Colonic mucosa (tissue), 4 donors: ENCODE measurements at regions of chr3 and their contacts with region 1.

Region 1: GRCh38 chr3:158790901-158791589 is 10.8 kb upstream of the MFSD1 start:
- DNase-seq: no peak
- H3K4me3 ChIP-seq: no peak overlapping the region
- H3K27ac ChIP-seq: no peak overlapping the region
- H3K4me1 ChIP-seq: no peaks in the 10 kb centered on the region
- H3K27me3 ChIP-seq: no peaks in the 10 kb centered on the region
- CTCF ChIP-seq: peak; percentile 84

Region 2: DNA sequence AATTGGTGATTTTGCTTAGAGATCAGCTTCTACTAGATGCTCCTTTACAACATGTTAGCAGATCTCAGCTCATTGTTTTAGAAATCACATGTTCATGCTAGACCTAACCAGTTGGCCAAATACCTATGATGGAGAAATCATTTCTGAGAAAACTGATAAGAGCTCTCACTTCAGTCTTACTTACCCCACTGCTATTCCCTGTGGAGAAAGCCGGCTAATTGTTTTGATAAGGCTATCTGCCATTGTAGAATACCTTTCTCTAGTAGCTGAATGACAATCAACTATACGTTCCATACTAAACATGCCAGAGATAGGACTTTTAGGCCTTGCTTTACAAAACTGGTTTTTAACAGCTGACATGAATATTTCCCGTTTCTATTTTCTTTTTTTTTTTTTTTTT is 246.2 kb before region 1 on chr3:
- intact Hi-C with region 1: no loop called
- DNase-seq: no peak
- H3K4me3 ChIP-seq: no peak overlapping the region
- H3K27ac ChIP-seq: no peak overlapping the region
- H3K4me1 ChIP-seq: no peaks in the 10 kb centered on the region
- H3K27me3 ChIP-seq: no peaks in the 10 kb centered on the region
- CTCF ChIP-seq: no peak

Region 3: DNA sequence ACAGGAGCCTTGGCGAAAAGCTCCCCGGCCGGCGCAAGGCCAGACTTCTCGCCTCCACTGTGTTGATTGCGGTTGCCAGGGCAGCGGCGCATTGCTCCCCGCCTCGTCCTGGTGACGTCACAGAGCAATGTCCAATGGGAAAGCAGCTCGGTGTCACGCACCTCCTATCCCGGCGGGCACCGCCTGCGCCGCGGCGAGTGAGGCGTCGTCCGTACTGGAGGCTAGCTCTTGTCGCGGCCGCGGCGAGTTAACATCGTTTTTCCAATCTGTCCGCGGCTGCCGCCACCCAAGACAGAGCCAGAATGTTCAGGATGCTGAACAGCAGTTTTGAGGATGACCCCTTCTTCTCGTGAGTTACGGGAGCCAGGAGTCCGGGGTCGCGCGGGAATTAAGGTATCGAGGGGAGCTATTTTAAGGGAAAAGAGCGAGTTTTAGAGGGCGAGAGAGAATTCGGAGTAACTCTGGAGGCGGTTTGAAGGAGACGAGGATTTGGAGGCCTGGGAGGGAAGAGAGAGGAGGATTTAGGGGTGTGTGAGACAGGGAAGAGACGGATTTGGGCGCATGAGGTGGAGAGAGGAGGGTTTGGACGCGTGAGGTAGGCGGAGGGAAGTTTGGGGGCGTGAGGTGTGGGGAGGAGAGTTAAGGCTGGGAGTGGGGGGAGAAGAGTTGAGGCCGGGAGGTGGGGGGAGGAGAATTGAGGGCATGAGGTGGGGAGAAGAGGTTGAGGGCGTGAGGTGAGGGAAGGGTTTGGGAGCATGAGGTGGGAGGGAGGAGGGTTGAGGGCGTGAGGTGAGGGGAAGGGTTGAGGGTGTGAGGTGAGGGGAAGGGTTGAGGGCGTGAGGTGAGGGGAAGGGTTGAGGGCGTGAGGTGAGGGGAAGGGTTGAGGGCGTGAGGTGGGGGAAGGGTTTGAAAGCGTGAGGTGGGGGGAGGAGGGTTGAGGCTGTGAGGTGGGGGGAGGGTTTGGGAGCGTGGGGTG is 219.8 kb before region 1 on chr3 and contains the start of gene MLF1:
- intact Hi-C with region 1: no loop called
- DNase-seq: peak; percentile 97
- H3K4me3 ChIP-seq: peak within 1 kb of the TSS; percentile 34
- H3K27ac ChIP-seq: no peak within 1 kb of the TSS
- H3K4me1 ChIP-seq: no peaks in the 10 kb centered on the region
- H3K27me3 ChIP-seq: no peaks in the 10 kb centered on the region
- CTCF ChIP-seq: no peak
- total RNA-seq, gene MLF1: 4.4 to 4.9 TPM

Region 4: DNA sequence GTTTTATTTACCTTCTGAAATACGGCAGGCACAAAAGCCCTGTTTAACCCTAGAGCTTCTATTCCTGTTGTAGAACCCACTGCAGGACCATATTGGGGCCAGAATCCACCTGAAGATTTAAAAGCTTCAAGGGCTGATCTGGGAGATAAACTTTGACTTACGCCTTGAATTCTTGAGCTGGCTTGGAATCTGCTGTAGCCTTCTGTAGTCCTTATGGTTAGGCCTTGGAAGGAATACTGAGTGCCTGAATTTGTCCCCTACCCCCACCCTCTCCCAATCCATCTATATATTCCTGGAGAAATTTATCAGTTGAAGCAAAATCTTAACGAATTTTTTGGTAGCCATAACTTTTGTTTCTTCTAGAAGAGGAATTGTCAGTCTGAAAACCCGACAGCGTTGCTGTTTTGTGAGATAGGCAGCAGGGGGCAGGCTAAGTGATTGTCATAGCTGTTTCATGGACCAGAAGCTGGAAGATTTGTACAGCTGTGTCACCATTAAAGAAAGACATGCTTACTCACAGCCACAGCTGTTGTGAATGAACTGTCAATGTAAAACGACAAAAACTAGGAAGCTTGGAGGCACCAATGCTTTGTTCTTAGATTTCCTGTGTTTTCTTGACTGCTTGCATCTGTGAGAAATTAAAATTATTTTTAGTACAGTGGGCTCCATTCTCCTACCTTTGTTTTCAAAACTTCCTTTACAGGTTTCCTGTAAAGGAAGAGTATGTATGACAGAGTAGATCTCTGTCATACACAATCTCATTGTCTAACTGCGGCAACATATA is 131.4 kb before region 1 on chr3:
- intact Hi-C with region 1: loop called (anchors 5 kb)
- DNase-seq: peak; percentile 67
- H3K4me3 ChIP-seq: no peak overlapping the region
- H3K27ac ChIP-seq: no peak overlapping the region
- H3K4me1 ChIP-seq: no peaks in the 10 kb centered on the region
- H3K27me3 ChIP-seq: no peaks in the 10 kb centered on the region
- CTCF ChIP-seq: peak; percentile 55

Region 5: GRCh38 chr3:158727206-158728060 is 63.6 kb before region 1 on chr3:
- intact Hi-C with region 1: loop called (anchors 2 kb)
- DNase-seq: peak; percentile 80
- H3K4me3 ChIP-seq: peak overlapping the region; percentile 4
- H3K27ac ChIP-seq: peak overlapping the region; percentile 96
- H3K4me1 ChIP-seq: peaks cover 40% of the 10 kb centered on the region
- H3K27me3 ChIP-seq: no peaks in the 10 kb centered on the region
- CTCF ChIP-seq: peak; percentile 83

Region 6: DNA sequence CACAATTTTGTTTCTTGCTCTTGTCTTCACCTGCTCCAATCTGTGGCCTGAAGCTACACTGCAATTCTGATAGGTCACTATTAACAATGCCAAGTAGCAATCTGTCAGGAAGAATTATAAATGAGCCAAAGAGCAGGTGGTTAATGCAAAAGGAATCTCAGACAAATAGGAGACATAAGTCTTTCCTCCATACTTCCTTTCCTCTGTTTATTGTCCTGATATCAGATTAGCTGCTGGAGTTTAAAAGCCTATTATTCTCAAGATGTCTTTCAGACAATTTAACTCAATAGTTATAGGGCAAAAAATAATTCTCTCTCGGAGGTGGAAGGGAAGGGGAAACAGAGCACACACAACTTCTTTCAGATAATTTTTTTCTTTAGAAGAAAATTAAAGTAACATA is 502.4 kb after region 1 on chr3:
- intact Hi-C with region 1: no loop called
- DNase-seq: no peak
- H3K4me3 ChIP-seq: no peak overlapping the region
- H3K27ac ChIP-seq: no peak overlapping the region
- H3K4me1 ChIP-seq: no peaks in the 10 kb centered on the region
- H3K27me3 ChIP-seq: no peaks in the 10 kb centered on the region
- CTCF ChIP-seq: no peak